Posterior cingulate gyrus (tissue), 11 donors: ENCODE measurements at regions of chr2 and their contacts with region 1.

Region 1: DNA sequence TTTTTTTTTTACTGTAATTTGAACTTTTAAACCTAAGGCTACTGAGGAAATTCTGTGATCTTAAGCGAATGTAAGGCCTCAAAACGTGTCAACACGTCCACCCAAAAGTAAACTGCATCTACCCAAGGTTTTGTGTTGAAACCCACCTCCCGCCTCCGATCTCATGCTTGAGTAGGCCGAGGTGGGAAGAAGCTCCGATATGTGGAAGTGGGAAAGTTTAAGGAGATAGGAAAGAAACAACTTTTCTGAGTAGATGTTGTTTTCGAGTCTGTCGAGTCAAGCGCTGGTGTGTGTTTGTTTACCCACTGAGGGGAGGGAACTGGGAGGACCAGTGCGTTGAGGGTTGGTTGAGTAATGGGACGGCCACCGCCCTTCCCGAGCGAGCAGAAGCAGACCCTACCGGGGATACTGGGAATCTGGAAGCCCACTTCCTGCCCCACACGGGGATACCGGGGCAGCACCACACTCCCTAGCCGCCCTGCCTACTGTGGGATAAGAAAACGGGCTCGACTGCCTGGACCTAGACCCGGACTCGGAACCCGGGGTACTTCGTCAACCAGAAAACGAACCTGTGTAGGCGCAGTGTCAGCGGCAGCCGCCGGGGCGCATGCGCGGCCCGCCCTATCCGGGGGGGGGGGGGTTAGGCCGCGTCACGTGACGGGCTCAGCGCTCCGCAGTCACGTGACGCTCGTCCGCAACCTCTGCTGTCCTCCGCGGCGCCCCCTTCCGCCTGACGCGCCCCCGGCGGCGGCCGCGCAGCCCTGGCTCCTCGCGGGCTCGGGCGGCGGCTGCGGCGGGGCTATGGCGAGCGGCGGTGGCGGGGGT is at the start of gene RETREG2:
- DNase-seq: peak; percentile 64 to 95 (median 74)

Region 2: GRCh38 chr2:219160186-219161017 is 17.4 kb before region 1 on chr2 and contains the start of gene NHEJ1:
- intact Hi-C with region 1: loop called (anchors 2 kb)
- DNase-seq: peak; percentile 86 to 99 (median 95)

Region 3: DNA sequence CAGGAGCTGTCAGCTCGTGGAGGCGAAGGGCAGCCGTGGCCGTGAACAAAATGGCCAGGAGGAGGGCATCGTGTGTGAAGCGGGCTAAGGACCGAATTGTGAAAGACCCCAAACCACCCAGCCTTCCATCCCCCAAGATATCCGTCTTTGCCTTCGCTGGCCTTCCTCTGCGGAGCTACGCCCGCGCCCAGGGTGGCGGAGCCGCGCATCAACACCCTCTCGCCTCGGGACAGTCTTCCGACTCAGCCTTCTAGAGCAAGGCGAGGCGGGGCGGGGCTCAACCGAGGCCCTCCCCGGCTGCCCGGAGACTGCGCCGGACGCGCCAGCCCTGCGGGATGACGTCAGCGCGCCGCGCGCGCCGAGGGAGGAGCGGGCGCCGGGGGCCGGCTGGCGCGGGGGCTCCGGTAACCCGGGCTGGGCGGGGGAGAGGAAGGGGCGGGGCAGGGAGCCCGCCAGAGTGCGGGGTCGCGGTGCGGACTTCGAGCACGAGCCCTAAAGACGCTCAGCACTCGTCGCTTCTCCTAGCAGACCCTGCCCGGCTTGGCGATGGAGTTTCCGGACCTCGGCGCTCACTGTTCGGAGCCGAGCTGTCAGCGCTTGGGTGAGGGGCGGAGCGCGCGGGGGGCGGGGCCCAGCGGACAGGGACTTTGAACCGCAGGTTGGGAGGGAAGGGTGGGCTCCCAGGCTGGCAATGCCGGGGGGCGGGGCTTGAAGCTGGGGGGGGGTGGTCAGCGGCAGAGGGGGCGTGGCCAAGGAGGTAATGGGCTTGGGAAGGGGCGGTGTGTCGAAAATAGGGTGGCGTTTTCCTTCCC is 28.9 kb after region 1 on chr2 and contains the start of gene ZFAND2B:
- intact Hi-C with region 1: loop called (anchors 2 kb)
- DNase-seq: peak; percentile 90 to 99 (median 95)

Region 4: DNA sequence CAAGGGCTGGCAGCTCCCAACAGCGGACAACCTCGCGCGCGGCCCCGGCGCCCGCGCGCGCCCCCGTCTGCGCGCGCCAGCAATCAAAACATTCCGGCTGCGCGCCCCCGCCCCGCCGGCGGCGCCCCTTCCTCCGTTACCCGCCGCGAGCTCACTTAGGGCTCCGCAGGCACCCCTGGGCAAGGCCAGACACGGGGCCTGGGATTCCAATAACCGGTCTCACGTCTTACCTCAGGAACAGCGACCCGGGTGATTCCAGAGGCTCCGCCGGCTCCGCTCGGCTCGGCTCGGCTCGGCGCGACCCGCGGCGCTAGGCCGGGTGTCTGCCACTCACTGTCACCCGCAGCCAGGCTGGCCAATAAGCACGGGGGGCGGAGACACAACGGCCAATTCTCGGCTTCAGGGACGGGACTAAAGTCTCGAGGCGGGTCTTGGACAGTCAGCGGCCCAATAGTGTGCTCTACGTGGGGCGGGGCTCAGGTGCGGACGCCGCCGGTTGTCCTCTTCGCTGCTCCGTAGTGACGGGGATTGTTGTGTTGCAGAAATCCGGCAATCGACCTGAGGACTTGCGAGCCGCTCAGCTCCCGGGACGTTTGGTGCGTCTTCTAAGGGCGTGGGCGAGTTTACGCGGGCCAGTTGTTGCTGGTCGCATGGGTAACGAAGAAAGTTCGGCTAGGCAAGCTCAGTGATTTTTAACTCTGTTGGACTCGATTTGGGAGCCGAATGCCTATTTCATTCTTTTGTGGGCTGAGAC is 51.7 kb after region 1 on chr2 and contains the starts of genes ANKZF1 and ATG9A:
- intact Hi-C with region 1: loop called (anchors 1 kb)
- DNase-seq: peak; percentile 98 to 100 (median 100)

Region 5: GRCh38 chr2:219278655-219279516 is 101.1 kb after region 1 on chr2 and contains the start of gene DNAJB2:
- intact Hi-C with region 1: loop called (anchors 2 kb)
- DNase-seq: peak; percentile 98 to 100 (median 99)

Region 6: GRCh38 chr2:219294356-219295351 is 116.9 kb after region 1 on chr2:
- intact Hi-C with region 1: loop called (anchors 5 kb)
- DNase-seq: peak; percentile 77 to 98 (median 84)